ENCODE measurements at regions of chr6 and their contacts with region 1.

Region 1: GRCh38 chr6:82397962-82398692 is 34.5 kb downstream of the TPBG start:
- DNase-seq: no peak
- ATAC-seq: no peak
- H3K4me3 ChIP-seq: no peak overlapping the region
- H3K27ac ChIP-seq: no peak overlapping the region
- H3K4me1 ChIP-seq: no peaks in the 10 kb centered on the region
- H3K27me3 ChIP-seq: no peaks in the 10 kb centered on the region
- CTCF ChIP-seq: no peak
- EP300 ChIP-seq: no peak
- POLR2A ChIP-seq: no peak
- RAD21 ChIP-seq: no peak

Region 2: GRCh38 chr6:82303808-82304207 is 94.3 kb before region 1 on chr6:
- CTCF ChIA-PET with region 1: no interaction called
- POLR2A ChIA-PET with region 1: no interaction called
- in situ Hi-C with region 1: no loop called
- intact Hi-C with region 1: no loop called
- DNase-seq: no peak
- ATAC-seq: no peak
- H3K4me3 ChIP-seq: no peak overlapping the region
- H3K27ac ChIP-seq: no peak overlapping the region
- H3K4me1 ChIP-seq: no peaks in the 10 kb centered on the region
- H3K27me3 ChIP-seq: no peaks in the 10 kb centered on the region; a peak in 1 of 5 replicates
- CTCF ChIP-seq: no peak
- EP300 ChIP-seq: no peak
- POLR2A ChIP-seq: no peak
- RAD21 ChIP-seq: no peak

Region 3: DNA sequence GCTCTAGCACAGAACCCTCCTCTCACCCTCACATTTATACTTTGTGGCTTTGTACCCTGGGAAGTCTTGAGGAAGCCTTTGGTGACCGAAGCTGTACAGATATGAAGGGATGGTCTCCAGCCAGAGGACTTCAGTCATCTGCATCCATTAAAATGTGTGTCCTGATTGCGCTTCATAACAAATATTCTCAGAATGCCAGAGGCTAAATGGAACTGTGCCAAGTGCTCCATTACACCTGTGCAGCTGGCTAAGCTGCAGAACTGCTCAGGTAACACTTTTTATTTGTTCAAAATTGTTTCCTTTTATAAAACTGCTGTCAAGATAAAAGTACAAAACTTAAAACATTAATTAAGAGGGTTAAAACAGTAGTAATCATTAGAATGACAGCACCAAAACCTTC is 12.2 kb before region 1 on chr6:
- CTCF ChIA-PET with region 1: no interaction called
- POLR2A ChIA-PET with region 1: no interaction called
- in situ Hi-C with region 1: no loop called
- intact Hi-C with region 1: loop called (anchors 1 kb)
- DNase-seq: no peak
- ATAC-seq: no peak
- H3K4me3 ChIP-seq: no peak overlapping the region
- H3K27ac ChIP-seq: no peak overlapping the region
- H3K4me1 ChIP-seq: no peaks in the 10 kb centered on the region
- H3K27me3 ChIP-seq: no peaks in the 10 kb centered on the region
- CTCF ChIP-seq: no peak
- EP300 ChIP-seq: no peak
- POLR2A ChIP-seq: no peak
- RAD21 ChIP-seq: no peak